ENCODE measurements at regions of chr15 and their contacts with region 1.

Region 1: DNA sequence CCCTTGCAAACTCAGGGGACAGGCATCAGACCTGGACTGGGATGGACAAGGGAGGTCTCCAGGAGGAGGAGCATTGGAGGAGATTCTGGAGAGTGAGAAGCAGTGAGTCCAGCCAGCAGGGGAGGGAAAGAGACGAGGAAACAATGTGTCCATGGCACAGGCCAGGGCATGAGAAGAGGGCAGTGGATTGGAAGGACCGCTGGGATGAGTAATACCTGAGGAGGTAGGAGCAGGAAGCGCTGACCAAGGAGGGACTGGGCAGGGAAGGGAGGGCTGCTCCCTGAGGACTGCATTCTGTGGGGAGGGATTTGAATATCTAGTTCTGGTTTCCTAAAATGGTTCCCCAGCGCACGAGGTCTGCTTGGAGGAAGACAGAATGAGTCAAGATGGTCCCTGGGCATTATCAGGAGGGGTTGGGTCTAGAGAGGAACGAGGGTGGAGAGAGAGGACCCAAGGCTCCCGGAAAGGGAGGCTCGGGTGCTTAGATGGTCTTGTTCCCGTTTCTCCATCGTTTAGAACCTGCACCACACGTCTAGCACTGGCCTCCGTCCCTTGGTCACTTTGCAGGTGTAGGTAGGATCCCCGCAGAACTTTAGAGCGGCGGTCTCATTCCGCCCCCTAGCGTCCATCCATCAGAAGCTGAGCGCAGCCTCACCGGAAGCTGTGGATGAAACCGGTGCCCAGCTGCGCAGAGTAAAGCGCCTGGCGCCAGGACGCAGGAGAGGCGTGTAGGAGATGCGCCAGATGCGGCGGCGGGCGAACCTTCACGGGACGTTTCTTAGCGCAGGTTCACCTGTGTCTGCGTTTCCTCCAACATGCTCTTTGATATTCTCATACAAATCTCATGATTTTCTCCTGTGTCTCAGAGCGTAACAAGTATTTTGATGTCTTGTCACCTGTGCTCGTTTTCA is 190.7 kb upstream of the NDN start:
- DNase-seq: peak; percentile 75
- H3K4me3 Mint-ChIP-seq: no peak overlapping the region
- H3K27ac Mint-ChIP-seq: no peak overlapping the region
- H3K4me1 Mint-ChIP-seq: no peaks in the 10 kb centered on the region
- H3K27me3 Mint-ChIP-seq: no peaks in the 10 kb centered on the region

Region 2: GRCh38 chr15:23648920-23649515 is 228.7 kb before region 1 on chr15:
- intact Hi-C with region 1: loop called (anchors 5 kb)
- DNase-seq: peak; percentile 62
- H3K4me3 Mint-ChIP-seq: no peak overlapping the region
- H3K27ac Mint-ChIP-seq: no peak overlapping the region
- H3K4me1 Mint-ChIP-seq: no peaks in the 10 kb centered on the region
- H3K27me3 Mint-ChIP-seq: peaks cover 6% of the 10 kb centered on the region